Activated CD4-positive, alpha-beta T cell treated with anti-CD3 and anti-CD28 coated beads for 36 hours (primary cell): ENCODE measurements at regions of chr13 and their contacts with region 1.

Region 1: GRCh38 chr13:50911937-50912795 is 2.6 kb downstream of the RNASEH2B start:
- DNase-seq: peak; percentile 96
- ATAC-seq: peak; percentile 52
- H3K4me3 Mint-ChIP-seq: peak overlapping the region; percentile 95
- H3K27ac Mint-ChIP-seq: peak overlapping the region; percentile 99
- H3K4me1 Mint-ChIP-seq: peaks cover 44% of the 10 kb centered on the region
- H3K27me3 Mint-ChIP-seq: no peaks in the 10 kb centered on the region

Region 2: DNA sequence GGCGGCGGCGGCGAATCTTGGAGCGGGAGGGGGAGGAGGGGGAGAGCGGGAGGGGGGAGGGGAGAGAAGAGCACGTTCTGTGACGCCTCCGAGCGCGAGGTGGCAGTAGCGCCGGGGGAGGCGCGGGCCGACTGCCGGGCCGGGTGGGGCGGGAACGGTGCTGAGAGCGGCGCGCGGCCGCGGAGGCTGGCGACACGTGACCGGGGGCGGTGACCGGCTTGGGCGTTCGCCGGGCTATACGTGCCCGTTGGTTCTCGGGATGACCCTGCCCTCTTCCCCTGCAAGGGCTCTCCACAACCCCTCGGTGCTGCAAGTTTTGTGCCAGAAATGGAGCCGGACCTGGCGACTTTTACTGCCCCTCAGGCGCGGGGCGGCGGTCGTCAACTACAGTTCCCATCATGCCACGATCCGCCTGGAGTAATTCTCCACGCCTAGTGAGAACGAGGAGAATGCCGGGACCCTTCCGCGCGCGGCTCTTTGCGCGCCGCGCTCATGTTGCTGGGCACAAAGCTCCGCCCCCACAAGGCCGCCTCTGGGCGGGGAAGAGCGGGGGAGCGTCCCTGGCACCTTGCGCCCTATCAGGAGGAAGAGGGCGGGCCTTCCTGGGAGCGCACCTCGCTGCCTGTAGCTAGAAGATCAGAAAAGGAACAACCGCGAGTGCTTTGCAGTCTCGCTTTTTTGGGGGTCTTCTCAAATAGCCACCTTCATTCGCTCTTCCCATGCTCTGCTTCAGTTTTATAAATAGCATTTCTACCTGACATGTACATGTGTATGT is 1119.4 kb before region 1 on chr13 and contains the start of gene KPNA3:
- CTCF ChIA-PET with region 1: no interaction called
- POLR2A ChIA-PET with region 1: no interaction called
- intact Hi-C with region 1: loop called (anchors 1 to 2 kb)
- DNase-seq: peak; percentile 98
- ATAC-seq: peak; percentile 93
- H3K4me3 Mint-ChIP-seq: peak within 1 kb of the TSS; percentile 89
- H3K27ac Mint-ChIP-seq: peak within 1 kb of the TSS; percentile 88
- H3K4me1 Mint-ChIP-seq: peaks cover 30% of the 10 kb centered on the region
- H3K27me3 Mint-ChIP-seq: peaks cover 4% of the 10 kb centered on the region
- total RNA-seq, gene KPNA3: 51.7 to 58.0 TPM

Region 3: GRCh38 chr13:50081679-50082425 is 830.3 kb before region 1 on chr13:
- CTCF ChIA-PET with region 1: interaction called, 6 read pairs
- POLR2A ChIA-PET with region 1: no interaction called
- intact Hi-C with region 1: loop called (anchors 1 to 2 kb)
- DNase-seq: peak; percentile 99
- ATAC-seq: peak; percentile 76
- H3K4me3 Mint-ChIP-seq: peak overlapping the region; percentile 94
- H3K27ac Mint-ChIP-seq: peak overlapping the region; percentile 98
- H3K4me1 Mint-ChIP-seq: peaks cover 37% of the 10 kb centered on the region
- H3K27me3 Mint-ChIP-seq: peaks cover 8% of the 10 kb centered on the region

Region 4: GRCh38 chr13:50236898-50237318 is 675.3 kb before region 1 on chr13:
- CTCF ChIA-PET with region 1: no interaction called
- POLR2A ChIA-PET with region 1: no interaction called
- intact Hi-C with region 1: loop called in 1 of 2 experiments (anchors 5 kb)
- DNase-seq: peak; percentile 60
- ATAC-seq: peak; percentile 92
- H3K4me3 Mint-ChIP-seq: peak overlapping the region; percentile 47
- H3K27ac Mint-ChIP-seq: peak overlapping the region; percentile 74
- H3K4me1 Mint-ChIP-seq: peaks cover 47% of the 10 kb centered on the region
- H3K27me3 Mint-ChIP-seq: peaks cover 18% of the 10 kb centered on the region

Region 5: GRCh38 chr13:50801087-50801931 is 110.9 kb before region 1 on chr13:
- CTCF ChIA-PET with region 1: interaction called, 17 read pairs
- POLR2A ChIA-PET with region 1: no interaction called
- intact Hi-C with region 1: loop called (anchors 1 kb)
- DNase-seq: peak; percentile 78
- ATAC-seq: peak; percentile 96
- H3K4me3 Mint-ChIP-seq: no peak overlapping the region
- H3K27ac Mint-ChIP-seq: no peak overlapping the region
- H3K4me1 Mint-ChIP-seq: peaks cover 9% of the 10 kb centered on the region
- H3K27me3 Mint-ChIP-seq: peaks cover 3% of the 10 kb centered on the region

Region 6: DNA sequence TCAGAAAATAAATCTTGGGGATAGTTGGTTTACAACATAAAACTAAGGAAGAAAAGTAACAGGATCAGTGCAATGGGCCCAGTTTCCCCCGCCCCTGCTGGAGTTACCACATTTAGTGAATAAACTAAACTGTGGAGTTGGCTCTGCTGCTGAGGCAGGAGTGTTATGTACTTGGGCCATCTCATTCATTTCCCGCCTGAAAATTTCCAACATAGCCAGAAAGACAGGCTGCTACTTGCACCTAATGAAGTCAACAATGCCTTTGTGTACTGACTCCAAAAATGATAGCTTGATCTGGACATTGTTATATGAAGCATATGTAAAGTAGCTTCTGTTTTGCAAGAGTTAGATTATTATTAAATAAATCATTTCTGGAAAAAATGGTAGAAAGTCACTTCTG is 10.5 kb before region 1 on chr13:
- CTCF ChIA-PET with region 1: interaction called, 10 read pairs
- POLR2A ChIA-PET with region 1: no interaction called
- intact Hi-C with region 1: no loop called
- DNase-seq: no peak
- ATAC-seq: no peak
- H3K4me3 Mint-ChIP-seq: no peak overlapping the region
- H3K27ac Mint-ChIP-seq: no peak overlapping the region
- H3K4me1 Mint-ChIP-seq: no peaks in the 10 kb centered on the region
- H3K27me3 Mint-ChIP-seq: no peaks in the 10 kb centered on the region

Region 7: DNA sequence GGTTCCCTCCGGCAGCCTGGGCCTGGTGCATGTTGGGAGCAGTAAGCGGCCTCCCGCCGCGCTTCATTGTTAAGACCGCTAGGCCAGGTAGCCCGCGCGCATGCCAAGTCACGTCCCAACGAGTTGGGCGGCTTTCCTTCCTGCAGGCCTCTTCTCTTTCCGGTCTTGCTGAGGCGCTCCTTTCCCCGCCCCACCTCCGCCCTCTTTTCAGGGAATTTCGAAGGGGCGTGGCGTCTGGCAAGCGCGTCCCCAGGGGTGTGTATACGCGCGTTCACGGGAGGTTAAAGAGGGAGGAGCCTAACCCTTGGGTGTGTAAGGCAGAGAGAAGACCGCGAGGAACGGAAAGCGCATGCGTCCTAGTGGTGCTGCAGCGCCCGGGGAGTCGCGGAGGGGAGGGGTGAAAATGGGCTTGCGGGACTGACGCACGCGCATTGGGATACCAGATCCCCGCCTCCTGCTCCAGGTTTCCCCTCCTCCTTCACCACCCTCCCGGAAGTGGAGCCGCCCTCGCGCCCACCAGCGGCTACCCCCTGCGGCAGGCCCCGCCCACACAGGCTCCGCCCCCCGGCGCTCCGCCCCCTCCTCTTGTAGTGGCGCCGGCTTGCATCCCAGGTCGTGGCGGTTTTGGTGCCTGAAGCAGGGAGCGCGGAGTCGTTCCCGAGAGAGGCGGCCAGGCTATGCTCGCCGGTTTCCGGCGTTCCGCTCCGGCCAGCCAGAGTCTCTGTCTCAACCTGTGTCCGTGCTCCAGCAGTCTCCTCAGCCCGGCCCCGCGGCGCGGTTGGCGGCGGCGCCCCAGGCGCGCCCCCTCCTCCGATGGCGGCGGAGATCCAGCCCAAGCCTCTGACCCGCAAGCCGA is 671.9 kb after region 1 on chr13 and contains the start of gene WDFY2:
- CTCF ChIA-PET with region 1: no interaction called
- POLR2A ChIA-PET with region 1: no interaction called
- intact Hi-C with region 1: loop called in 1 of 2 experiments (anchors 5 kb)
- DNase-seq: peak; percentile 100
- ATAC-seq: peak; percentile 88
- H3K4me3 Mint-ChIP-seq: peak within 1 kb of the TSS; percentile 89
- H3K27ac Mint-ChIP-seq: peak within 1 kb of the TSS; percentile 95
- H3K4me1 Mint-ChIP-seq: peaks cover 37% of the 10 kb centered on the region
- H3K27me3 Mint-ChIP-seq: no peaks in the 10 kb centered on the region
- total RNA-seq, gene WDFY2: 7.4 to 9.5 TPM